ENCODE measurements at regions of chr11 and their contacts with region 1.

Region 1: DNA sequence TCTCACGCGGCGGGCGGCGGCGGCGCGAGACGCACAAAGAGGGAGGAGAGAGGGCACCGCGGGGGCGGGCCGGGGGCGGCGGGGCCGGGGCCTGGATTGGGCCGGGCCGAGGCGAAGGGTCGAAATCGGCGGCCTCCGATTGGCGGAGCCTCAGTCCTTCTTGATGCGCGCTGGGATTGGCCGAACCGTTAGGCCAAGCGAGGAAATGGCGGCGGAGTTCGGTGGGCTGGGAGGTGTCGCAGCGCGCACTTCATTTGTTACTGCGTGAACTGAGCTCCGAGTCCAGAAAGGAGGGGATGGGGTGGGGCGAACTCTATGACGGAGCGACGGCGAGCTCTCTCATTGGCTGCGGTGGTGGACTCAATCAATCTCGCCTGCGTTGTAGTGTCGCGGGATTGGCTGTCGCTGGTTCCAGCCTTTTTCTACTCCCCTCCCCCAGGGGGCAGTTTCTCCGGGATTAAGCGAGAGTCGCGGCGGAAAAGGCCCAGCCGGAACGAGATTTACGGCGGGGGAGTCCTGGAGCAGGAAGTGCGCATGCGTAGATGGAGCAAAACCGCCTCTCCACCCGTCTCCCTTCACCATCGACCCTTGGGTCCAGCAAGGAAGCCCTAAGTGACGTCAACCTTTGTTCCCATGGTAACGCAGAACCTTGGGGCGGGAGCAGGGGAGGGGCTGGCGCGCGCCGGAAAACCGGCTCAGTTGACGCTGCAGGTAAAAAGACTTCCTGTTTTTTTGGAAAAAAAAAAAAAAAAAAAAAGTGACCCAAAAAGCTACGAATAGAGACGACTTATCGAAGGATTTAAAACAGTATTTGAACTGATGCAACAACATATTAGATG is at the start of gene SF1:
- DNase-seq: peak; percentile 100
- H3K4me3 ChIP-seq: peak within 1 kb of the TSS; percentile 58 to 99 (median 85)
- H3K27ac ChIP-seq: peak within 1 kb of the TSS; percentile 95 to 96
- H3K4me1 ChIP-seq: peaks cover 24 to 46% (median 35%) of the 10 kb centered on the region in 4 experiments
- H3K27me3 ChIP-seq: no peaks in the 10 kb centered on the region

Region 2: DNA sequence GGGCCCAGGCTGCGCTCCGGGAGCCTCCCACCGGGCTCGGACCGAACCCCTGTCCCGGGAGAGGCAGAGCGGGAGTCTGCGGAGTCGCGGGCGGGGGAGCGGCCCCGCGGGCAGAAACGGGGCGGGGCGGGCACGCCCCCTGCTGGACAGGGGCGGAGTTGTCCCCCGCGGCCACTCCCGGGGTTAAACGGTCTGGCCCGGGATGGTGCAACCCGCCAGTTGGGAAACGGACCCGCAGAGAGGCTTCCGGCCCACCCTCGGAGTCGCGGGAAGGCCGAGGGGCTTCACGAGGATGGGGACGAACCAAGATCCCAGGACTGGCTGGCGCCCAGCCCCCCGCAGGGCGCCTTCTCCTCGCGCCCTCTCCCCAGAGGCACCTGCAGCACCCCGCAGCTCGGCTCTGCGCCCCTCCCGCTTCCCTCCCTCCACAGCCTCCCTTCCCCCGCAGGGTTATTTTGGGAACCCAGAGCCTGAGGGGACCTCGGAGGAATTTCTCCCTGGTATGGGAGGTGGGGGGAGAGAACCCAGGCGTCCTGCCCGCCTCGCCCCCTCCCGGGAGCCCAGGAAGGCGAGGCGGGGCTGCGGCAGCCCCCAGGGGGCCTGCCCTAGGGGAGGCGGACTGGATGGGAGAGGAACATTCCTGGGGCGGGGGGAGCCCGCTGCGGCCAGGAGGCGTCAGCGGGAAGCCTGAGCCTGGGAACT is 35.7 kb before region 1 on chr11:
- CTCF ChIA-PET with region 1: interaction called, 9 read pairs
- POLR2A ChIA-PET with region 1: interaction called, 25 read pairs
- DNase-seq: peak; percentile 54 to 72 (median 66)
- H3K4me3 ChIP-seq: peak overlapping the region; percentile 70 to 90 (median 85)
- H3K27ac ChIP-seq: peak overlapping the region in 1 of 2 experiments; percentile 74
- H3K4me1 ChIP-seq: peaks cover 0 to 54% (median 42%) of the 10 kb centered on the region in 4 experiments
- H3K27me3 ChIP-seq: no peaks in the 10 kb centered on the region

Region 3: DNA sequence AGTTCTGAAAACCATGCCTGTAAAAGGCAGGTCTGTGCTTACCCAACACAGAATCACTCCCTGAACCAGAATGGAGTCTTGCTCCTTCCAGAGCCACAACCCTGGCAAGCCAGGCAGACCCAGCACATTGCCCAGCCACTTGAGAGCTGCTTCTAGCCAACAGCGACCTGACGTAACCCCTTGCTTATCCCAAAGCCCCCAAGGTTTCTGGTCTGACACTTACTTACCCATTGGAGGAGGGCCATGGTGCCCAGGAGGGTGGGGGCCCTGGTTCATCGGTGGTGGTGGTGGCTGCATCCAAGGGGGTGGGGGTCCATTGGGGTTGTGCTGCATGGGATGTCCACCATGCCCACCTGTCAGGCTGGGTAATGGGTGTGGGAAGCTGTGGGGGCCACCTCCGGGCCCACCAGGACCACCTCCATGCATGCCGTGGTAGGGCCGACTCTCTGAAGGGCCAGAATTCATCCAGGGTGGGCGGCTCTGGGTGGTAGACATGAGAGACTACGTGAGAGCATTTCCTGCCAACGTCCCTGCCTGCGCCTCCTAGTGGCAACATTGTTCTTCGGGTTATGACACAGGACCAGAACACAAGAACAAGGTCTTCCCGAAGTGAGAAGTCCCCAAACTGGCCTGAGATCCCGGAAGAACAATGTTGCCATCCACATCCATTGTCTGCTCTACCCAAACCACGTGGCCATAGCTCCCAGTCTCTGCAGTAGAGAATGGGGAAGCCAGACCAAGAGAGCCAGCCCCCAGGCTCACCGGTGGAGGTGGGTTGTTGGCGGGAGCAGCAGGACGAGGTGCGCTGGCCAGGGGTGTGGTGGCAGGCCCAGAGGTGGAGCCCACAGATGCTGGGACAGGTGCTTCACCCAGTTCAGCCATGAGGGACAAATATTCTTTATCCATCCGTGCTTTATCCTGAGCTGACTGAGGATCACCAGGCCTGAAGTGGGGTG is 11.1 kb before region 1 on chr11:
- CTCF ChIA-PET with region 1: interaction called, 31 read pairs
- POLR2A ChIA-PET with region 1: interaction called, 9 read pairs
- DNase-seq: peak; percentile 77 to 88 (median 84)
- H3K4me3 ChIP-seq: no peak overlapping the region
- H3K27ac ChIP-seq: peak overlapping the region; percentile 16 to 52
- H3K4me1 ChIP-seq: peaks cover 20 to 66% (median 53%) of the 10 kb centered on the region in 4 experiments
- H3K27me3 ChIP-seq: no peaks in the 10 kb centered on the region

Region 4: DNA sequence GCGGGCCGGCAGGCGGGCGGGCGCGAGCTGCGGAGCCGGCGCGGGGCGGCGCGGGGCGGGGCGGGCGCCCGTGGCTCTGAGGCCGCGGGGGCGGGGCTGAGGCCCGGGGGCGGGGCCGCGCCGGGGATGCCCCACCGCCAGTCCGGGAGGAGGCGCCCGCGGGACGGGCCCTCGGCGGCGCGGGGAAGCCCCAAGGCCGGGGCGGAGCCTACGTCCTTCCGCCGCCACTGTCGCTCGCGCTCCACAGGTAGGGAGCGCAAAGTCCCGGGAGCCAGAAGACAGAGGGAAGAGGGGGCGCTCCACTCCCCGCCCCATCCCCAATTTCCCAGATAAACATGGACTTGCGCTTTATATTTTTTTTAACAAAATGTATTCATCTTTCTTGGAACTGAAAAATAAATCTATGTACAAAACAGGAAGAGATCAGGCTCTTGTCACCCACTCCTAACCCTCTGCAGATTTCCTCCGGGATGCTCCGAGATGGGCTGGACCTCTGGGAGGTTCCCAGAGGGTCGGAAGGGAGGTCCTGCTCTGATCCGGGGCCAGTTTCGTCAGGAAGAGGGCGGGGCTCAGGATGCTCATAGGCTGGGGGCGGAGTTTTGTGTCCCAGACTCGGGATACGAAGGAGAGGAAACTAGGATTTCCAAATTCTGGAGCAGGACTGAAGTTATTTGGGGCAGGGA is 24.6 kb after region 1 on chr11 and contains the start of gene MAP4K2:
- CTCF ChIA-PET with region 1: interaction called, 14 read pairs
- POLR2A ChIA-PET with region 1: interaction called, 6 read pairs
- DNase-seq: peak; percentile 77 to 82 (median 79)
- H3K4me3 ChIP-seq: peak within 1 kb of the TSS; percentile 64 to 91 (median 80)
- H3K27ac ChIP-seq: peak within 1 kb of the TSS; percentile 58 to 86
- H3K4me1 ChIP-seq: peaks cover 0 to 55% (median 49%) of the 10 kb centered on the region in 4 experiments
- H3K27me3 ChIP-seq: no peaks in the 10 kb centered on the region

Region 5: GRCh38 chr11:64826578-64827450 is 48.1 kb after region 1 on chr11:
- CTCF ChIA-PET with region 1: no interaction called
- POLR2A ChIA-PET with region 1: no interaction called
- DNase-seq: no peak
- H3K4me3 ChIP-seq: no peak overlapping the region
- H3K27ac ChIP-seq: no peak overlapping the region
- H3K4me1 ChIP-seq: no peaks in the 10 kb centered on the region
- H3K27me3 ChIP-seq: no peaks in the 10 kb centered on the region